ENCODE measurements at regions of chr12 and their contacts with region 1.

Region 1: DNA sequence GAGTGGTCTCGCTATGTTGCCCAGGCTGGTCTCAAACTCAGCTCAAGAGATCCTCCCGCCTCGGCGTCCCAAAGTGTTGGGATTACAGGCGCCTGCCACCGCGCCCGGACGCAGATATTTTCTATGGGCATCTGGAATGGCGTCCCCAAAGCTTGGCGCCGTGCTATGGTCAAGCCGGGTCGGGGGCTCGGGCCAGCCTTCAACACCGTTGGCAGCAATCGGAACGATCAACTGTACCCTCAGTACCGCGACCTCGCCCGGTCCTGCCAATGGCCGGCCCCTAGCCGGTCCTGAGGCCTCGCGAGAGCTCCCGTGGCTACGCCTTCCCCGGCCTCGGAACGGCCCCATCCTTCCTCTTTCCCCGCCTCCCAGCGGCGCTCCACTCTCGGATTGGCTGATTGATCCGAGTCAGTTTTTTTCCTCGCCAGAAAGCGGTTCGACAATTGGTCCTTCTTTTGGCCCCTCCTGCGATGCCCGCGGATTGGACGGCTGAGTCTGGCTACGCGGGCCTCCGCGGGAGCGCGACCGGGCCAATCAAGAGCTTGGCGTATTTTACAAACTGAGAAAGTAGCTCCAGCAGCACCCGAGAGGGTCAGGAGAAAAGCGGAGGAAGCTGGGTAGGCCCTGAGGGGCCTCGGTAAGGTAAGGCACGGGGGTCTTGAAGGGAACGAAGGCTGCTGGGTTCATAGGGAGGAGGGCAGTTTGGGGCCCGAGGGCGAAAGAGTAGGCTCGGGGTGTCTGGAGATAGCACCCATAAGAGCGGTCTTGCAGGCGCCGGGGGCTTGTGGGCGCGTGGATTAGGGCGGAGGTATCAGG is at the start of gene TROAP:
- DNase-seq: peak; percentile 97
- H3K4me3 Mint-ChIP-seq: peak within 1 kb of the TSS; percentile 96
- H3K27ac Mint-ChIP-seq: peak within 1 kb of the TSS; percentile 94
- H3K4me1 Mint-ChIP-seq: peaks cover 28% of the 10 kb centered on the region
- H3K27me3 Mint-ChIP-seq: peaks cover 4% of the 10 kb centered on the region
- total RNA-seq, gene TROAP: 46.0 TPM in 2 replicates

Region 2: GRCh38 chr12:49069507-49070346 is 253.2 kb before region 1 on chr12 and contains the start of gene RHEBL1:
- intact Hi-C with region 1: loop called (anchors 1 kb)
- DNase-seq: peak; percentile 100
- H3K4me3 Mint-ChIP-seq: peak within 1 kb of the TSS; percentile 100
- H3K27ac Mint-ChIP-seq: peak within 1 kb of the TSS; percentile 97
- H3K4me1 Mint-ChIP-seq: peaks cover 26% of the 10 kb centered on the region
- H3K27me3 Mint-ChIP-seq: no peaks in the 10 kb centered on the region
- total RNA-seq, gene RHEBL1: 8.6 and 10.7 TPM in 2 replicates

Region 3: DNA sequence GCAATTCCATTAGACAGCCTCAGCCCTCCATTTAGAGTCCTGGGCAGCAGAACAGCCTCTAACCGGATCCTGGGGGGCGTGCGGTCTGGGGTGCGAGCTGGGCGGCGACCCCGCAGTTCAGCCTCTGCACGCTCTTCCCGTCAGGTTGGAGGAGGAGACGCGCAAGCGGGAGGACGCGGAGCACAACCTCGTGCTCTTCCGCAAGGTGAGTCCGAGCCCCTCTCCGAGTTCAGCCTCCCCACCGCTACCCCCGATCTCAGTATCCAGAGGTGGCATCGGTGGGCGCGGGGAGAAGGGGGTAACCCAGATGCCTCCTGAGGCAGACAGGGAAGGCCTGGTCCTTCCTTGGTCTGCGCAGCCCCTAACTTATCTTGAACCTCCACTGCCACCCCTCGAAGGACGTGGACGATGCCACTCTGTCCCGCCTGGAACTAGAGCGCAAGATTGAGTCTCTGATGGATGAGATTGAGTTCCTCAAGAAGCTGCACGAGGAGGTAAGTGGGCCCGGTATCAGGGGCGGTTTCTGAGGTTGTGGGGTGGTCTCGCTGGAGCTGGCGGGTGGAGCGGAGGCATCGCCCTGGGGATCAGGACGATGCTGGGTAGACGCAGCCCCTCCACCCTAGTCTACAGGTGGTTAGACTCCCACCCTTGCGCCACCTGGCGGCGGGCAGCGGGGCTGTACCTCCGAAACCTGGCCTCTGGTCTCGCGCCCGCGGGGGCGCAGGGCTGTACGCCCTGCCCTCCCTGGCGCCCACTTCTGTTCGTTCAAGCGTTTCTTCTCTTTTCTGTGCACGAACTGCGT is 26.7 kb before region 1 on chr12:
- intact Hi-C with region 1: loop called (anchors 1 kb)
- DNase-seq: peak; percentile 53
- H3K4me3 Mint-ChIP-seq: peak overlapping the region; percentile 75
- H3K27ac Mint-ChIP-seq: no peak overlapping the region
- H3K4me1 Mint-ChIP-seq: peaks cover 5% of the 10 kb centered on the region
- H3K27me3 Mint-ChIP-seq: peaks cover 41% of the 10 kb centered on the region

Region 4: DNA sequence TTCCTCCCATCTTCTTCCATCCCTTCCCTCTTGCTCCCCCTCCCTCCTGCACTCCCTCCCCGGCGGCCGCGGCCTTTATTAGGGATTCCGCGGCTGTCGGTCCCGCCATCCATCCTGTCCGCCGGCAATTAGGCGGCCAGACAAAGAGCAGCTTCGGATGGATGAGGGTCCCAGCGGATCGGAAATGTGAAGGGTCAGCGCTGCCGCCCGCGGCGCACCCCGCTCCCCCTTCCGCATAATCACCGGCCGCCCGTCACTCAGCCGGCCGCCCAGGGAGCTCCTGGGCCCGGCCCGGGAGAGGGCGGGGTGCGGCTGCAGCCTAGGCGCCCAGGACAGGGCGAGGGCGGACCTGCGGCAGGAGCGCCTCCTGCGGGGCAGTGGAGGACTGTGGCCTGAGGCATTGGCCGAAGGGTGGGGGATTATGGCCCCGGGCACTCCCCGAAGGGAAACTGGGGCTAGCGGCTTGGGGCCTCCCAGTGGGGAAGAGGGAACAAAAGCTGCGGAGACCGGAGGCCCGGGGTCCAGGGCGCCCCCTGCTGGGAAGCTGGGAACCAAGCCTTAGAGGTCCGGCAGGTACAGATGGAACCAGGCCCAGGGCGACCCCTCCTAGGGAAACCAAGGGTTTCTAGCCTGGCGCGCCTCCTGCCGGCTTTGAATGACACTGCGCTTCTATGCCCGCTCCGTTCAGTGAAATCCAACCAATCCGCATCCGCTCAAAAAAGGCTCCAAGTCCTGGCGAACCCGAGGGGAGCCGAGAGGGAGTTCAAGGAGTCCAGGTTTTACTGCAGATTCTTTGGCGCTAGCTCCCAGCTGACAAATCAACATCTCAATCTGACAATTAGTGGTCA is 19.4 kb after region 1 on chr12:
- intact Hi-C with region 1: loop called (anchors 1 kb)
- DNase-seq: peak; percentile 56
- H3K4me3 Mint-ChIP-seq: peak overlapping the region; percentile 37
- H3K27ac Mint-ChIP-seq: no peak overlapping the region
- H3K4me1 Mint-ChIP-seq: peaks cover 35% of the 10 kb centered on the region
- H3K27me3 Mint-ChIP-seq: peaks cover 77% of the 10 kb centered on the region

Measured in activated T-helper 1 cell treated with anti-CD3 and anti-CD28 coated beads, Interleukin-12 subunit alpha, Interleukin-12 subunit beta, Interleukin-2, Interleukin-4 antibody, amounts not matched to agents 30 ng/mL and 10 ng/mL and 1 ng/mL, durations not matched to agents 14 hours and 24 hours and 36 hours (primary cell).